Dorsolateral prefrontal cortex (tissue), 120 donors: ENCODE measurements at regions of chr11 and their contacts with region 1.

Region 1: GRCh38 chr11:132126973-132127899 is 756.8 kb downstream of the NTM start:
- DNase-seq: peak in 7 of 10 donors; percentile 47 to 87 (median 62)
- H3K4me3 ChIP-seq: peak overlapping the region in 58 of 59 donors; percentile 3 to 69 (median 49)
- H3K27ac ChIP-seq: peak overlapping the region in 54 of 59 donors; percentile 1 to 91 (median 76)
- H3K27me3 ChIP-seq: no peaks in the 10 kb centered on the region
- CTCF ChIP-seq: peak; percentile 36 to 86 (median 72)

Region 2: DNA sequence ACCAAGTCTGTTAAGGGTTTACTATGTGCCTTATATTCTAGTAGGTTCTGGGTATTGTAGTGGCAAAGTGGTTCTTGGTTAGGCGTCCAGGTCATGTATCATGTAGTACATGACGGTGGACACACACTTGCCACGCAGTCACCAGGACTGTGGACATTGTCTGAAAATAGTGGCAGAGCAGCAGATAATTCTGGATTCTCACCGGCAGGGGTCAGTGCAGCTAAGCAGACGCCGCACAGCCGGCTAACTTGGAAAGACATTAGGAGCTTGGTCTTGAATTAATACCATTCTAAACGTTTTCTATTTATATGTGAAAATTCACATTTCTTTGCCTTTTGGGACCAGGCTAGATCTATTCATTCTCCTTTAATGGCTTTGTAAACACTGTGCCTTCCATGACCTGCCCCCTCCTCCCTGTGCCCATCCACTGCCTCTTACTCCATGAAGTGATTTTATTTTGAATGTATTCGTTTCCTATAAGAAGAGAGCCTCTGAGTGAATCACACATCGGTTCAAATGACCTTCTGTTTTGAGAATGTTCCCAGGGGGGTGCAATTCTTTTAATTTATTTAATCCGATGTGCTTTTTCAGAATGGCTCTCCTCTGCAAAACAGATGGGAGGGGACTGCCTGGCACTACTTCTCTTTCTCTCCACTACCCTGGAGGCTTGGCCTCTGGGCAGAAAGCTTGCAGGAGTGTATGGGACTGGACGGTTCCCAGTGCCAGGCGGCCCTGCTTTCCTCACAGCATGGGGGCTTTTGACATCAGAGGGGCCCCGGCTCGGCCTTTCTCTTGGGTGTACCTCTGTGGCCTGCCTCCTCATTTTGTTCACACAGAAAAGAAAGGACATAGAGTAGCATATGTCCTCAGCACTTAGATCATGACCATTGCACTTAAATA is 378.8 kb before region 1 on chr11:
- intact Hi-C with region 1: loop called in 1 of 2 experiments (anchors 2 kb)
- DNase-seq: peak; percentile 57 to 86 (median 80)
- H3K4me3 ChIP-seq: no peak overlapping the region
- H3K27ac ChIP-seq: peak overlapping the region in 12 of 59 donors; percentile 5 to 68 (median 20)
- H3K27me3 ChIP-seq: no peaks in the 10 kb centered on the region
- CTCF ChIP-seq: peak; percentile 74 to 96 (median 90)

Region 3: GRCh38 chr11:131910523-131911387 is 216.5 kb before region 1 on chr11:
- intact Hi-C with region 1: loop called (anchors 2 to 5 kb)
- DNase-seq: peak in 3 of 10 donors; percentile 62 to 71 (median 64)
- H3K4me3 ChIP-seq: peak overlapping the region; percentile 37 to 78 (median 62)
- H3K27ac ChIP-seq: peak overlapping the region in 49 of 59 donors; percentile 21 to 91 (median 74)
- H3K27me3 ChIP-seq: peaks cover 0 to 16% (median 0%) of the 10 kb centered on the region in 45 donors
- CTCF ChIP-seq: peak in 1 of 56 donors; percentile 3

Region 4: DNA sequence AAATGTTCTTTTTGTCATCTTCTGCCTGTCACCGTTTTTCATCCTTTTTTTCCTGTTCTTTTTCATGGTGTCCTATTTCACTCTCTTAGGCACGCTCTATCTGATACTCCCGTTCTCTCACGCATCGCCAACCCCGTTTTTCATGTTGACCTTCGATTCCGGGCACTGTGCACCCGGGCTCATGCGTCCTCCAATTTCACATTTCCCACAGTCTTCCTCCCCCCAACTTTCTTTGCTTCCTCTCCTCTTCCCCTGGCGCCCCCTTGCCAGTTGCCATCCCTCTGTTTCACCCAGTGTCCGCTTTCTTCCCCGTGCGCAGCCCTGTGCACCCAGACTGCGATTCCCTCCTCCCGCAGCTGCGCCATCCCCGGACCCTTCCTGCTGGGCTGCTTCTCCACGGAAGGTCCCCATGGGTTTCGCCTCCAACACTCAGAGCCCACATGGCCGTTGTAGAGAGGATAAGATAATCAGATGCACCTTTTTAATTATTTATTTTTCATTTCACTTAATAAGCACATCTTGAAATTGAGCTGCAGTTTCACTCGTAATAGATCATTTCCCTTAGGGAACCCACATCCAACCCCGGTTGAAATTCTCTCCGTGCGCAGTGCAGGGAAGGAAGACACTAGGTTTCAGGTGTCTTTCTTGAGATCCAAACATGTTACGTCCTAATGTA is 34.3 kb after region 1 on chr11:
- intact Hi-C with region 1: no loop called
- DNase-seq: no peak
- H3K4me3 ChIP-seq: no peak overlapping the region
- H3K27ac ChIP-seq: no peak overlapping the region
- H3K27me3 ChIP-seq: no peaks in the 10 kb centered on the region
- CTCF ChIP-seq: no peak